Esophagus muscularis mucosa (tissue), 4 donors: ENCODE measurements at regions of chr20 and their contacts with region 1.

Region 1: GRCh38 chr20:45436732-45437391 is 20.9 kb downstream of the PIGT start:
- DNase-seq: peak; percentile 95
- H3K4me3 ChIP-seq: peak overlapping the region; percentile 59 to 77 (median 60)
- H3K27ac ChIP-seq: peak overlapping the region; percentile 80 to 84 (median 82)
- H3K4me1 ChIP-seq: peaks cover 5 to 14% (median 12%) of the 10 kb centered on the region in 4 donors
- H3K27me3 ChIP-seq: no peaks in the 10 kb centered on the region
- CTCF ChIP-seq: peak; percentile 94 to 98 (median 96)
- EP300 ChIP-seq: no peak
- POLR2A ChIP-seq: no peak

Region 2: GRCh38 chr20:45320948-45321595 is 115.8 kb before region 1 on chr20:
- intact Hi-C with region 1: loop called (anchors 2 kb)
- DNase-seq: no peak
- H3K4me3 ChIP-seq: no peak overlapping the region
- H3K27ac ChIP-seq: no peak overlapping the region
- H3K4me1 ChIP-seq: peaks cover 0 to 13% (median 3%) of the 10 kb centered on the region in 4 donors
- H3K27me3 ChIP-seq: peaks cover 0 to 19% (median 7%) of the 10 kb centered on the region in 4 donors
- CTCF ChIP-seq: no peak
- EP300 ChIP-seq: no peak
- POLR2A ChIP-seq: no peak

Region 3: GRCh38 chr20:45450097-45450818 is 13.4 kb after region 1 on chr20:
- intact Hi-C with region 1: no loop called
- DNase-seq: no peak
- H3K4me3 ChIP-seq: no peak overlapping the region
- H3K27ac ChIP-seq: peak overlapping the region in 3 of 4 donors; percentile 12 to 55 (median 41)
- H3K4me1 ChIP-seq: peaks cover 0 to 25% (median 16%) of the 10 kb centered on the region in 4 donors
- H3K27me3 ChIP-seq: no peaks in the 10 kb centered on the region
- CTCF ChIP-seq: peak; percentile 33 to 61 (median 42)
- EP300 ChIP-seq: no peak
- POLR2A ChIP-seq: no peak